Caco-2 (cell line): ENCODE measurements at regions of chr4 and their contacts with region 1.

Region 1: DNA sequence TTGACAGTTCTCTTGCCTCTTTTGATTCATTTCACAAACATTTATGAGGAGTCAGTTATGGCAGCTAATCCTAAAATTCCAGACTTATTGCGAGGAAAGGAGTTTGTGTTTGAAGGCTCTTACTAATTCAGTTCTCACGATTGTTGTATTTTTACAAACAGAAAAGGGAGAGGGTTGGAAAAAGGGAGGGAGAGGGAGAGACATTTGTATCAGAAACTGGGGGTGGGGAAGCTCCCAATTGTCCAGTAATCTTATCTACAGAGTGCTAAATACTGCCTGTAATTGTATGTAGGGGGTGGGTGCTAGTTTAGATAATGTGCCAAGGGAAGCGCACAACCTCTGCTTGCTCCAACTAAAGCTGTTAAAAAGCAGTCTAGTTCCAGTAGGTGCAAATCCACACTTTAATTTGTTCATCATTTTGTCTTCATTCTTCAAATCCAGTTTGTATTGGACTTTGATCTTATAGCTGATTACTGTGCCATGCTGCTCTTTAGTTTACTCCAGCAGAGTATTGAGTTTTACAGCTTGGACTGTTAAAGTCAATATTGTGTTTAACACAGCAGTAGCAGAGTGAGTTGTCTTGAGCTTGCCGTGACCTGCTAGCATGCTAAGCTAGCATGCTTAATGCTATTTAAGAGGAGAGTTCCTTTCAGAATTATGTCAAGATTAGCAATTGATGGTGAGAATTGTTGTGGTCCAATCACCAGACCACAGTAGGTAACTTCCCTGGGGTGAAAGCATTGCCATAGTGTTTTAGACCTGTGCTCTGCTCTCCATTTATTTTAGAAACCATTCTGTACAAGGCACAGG is 13.9 kb downstream of the FNIP2 start:
- DNase-seq: peak in 1 of 2 experiments; percentile 21
- H3K4me3 ChIP-seq: 0 out of 2 replicates have a peak overlapping the region, but pooled peaks have one; percentile 3
- H3K4me3 Mint-ChIP-seq: peak overlapping the region; percentile 50
- H3K27ac Mint-ChIP-seq: peak overlapping the region; percentile 54
- H3K4me1 ChIP-seq: peaks cover 29% of the 10 kb centered on the region
- H3K4me1 Mint-ChIP-seq: peaks cover 28% of the 10 kb centered on the region
- H3K27me3 ChIP-seq: no peaks in the 10 kb centered on the region
- H3K27me3 Mint-ChIP-seq: no peaks in the 10 kb centered on the region
- CTCF ChIP-seq: no peak

Region 2: GRCh38 chr4:158741326-158742025 is 41.3 kb before region 1 on chr4:
- CTCF ChIA-PET with region 1: no interaction called
- POLR2A ChIA-PET with region 1: no interaction called
- intact Hi-C with region 1: no loop called
- DNase-seq: no peak
- H3K4me3 ChIP-seq: no peak overlapping the region
- H3K4me3 Mint-ChIP-seq: no peak overlapping the region
- H3K27ac Mint-ChIP-seq: no peak overlapping the region
- H3K4me1 ChIP-seq: no peaks in the 10 kb centered on the region
- H3K4me1 Mint-ChIP-seq: no peaks in the 10 kb centered on the region
- H3K27me3 ChIP-seq: no peaks in the 10 kb centered on the region
- H3K27me3 Mint-ChIP-seq: peaks cover 2% of the 10 kb centered on the region
- CTCF ChIP-seq: no peak

Region 3: GRCh38 chr4:158801066-158801465 is 18.3 kb after region 1 on chr4:
- CTCF ChIA-PET with region 1: interaction called, 4 read pairs
- POLR2A ChIA-PET with region 1: interaction called, 4 read pairs
- intact Hi-C with region 1: loop called (anchors 1 kb)
- DNase-seq: no peak
- H3K4me3 ChIP-seq: no peak overlapping the region
- H3K4me3 Mint-ChIP-seq: no peak overlapping the region
- H3K27ac Mint-ChIP-seq: no peak overlapping the region
- H3K4me1 ChIP-seq: peaks cover 19% of the 10 kb centered on the region
- H3K4me1 Mint-ChIP-seq: peaks cover 22% of the 10 kb centered on the region
- H3K27me3 ChIP-seq: no peaks in the 10 kb centered on the region
- H3K27me3 Mint-ChIP-seq: peaks cover 9% of the 10 kb centered on the region
- CTCF ChIP-seq: no peak

Region 4: GRCh38 chr4:158826057-158826456 is 43.3 kb after region 1 on chr4:
- CTCF ChIA-PET with region 1: no interaction called
- POLR2A ChIA-PET with region 1: no interaction called
- intact Hi-C with region 1: loop called (anchors 1 kb)
- DNase-seq: no peak
- H3K4me3 ChIP-seq: no peak overlapping the region
- H3K4me3 Mint-ChIP-seq: peak overlapping the region; percentile 37
- H3K27ac Mint-ChIP-seq: peak overlapping the region; percentile 80
- H3K4me1 ChIP-seq: peaks cover 45% of the 10 kb centered on the region
- H3K4me1 Mint-ChIP-seq: peaks cover 54% of the 10 kb centered on the region
- H3K27me3 ChIP-seq: no peaks in the 10 kb centered on the region
- H3K27me3 Mint-ChIP-seq: no peaks in the 10 kb centered on the region
- CTCF ChIP-seq: no peak

Region 5: GRCh38 chr4:158850800-158851644 is 68.3 kb after region 1 on chr4:
- CTCF ChIA-PET with region 1: interaction called, 5 read pairs
- POLR2A ChIA-PET with region 1: no interaction called
- intact Hi-C with region 1: loop called (anchors 2 kb)
- DNase-seq: peak in 1 of 2 experiments; percentile 30
- H3K4me3 ChIP-seq: no peak overlapping the region
- H3K4me3 Mint-ChIP-seq: no peak overlapping the region
- H3K27ac Mint-ChIP-seq: no peak overlapping the region
- H3K4me1 ChIP-seq: no peaks in the 10 kb centered on the region
- H3K4me1 Mint-ChIP-seq: no peaks in the 10 kb centered on the region
- H3K27me3 ChIP-seq: no peaks in the 10 kb centered on the region
- H3K27me3 Mint-ChIP-seq: no peaks in the 10 kb centered on the region
- CTCF ChIP-seq: peak; percentile 52 to 55